PC-9 (cell line): ENCODE measurements at regions of chr15 and their contacts with region 1.

Region 1: GRCh38 chr15:82530606-82531379 is 9.5 kb downstream of the RPS17 start:
- DNase-seq: peak; percentile 48 to 75
- H3K4me3 ChIP-seq: peak overlapping the region; percentile 42; the same call in 1 of the 2 replicates
- H3K27ac ChIP-seq: no peak overlapping the region
- H3K4me1 ChIP-seq: no peaks in the 10 kb centered on the region
- H3K27me3 ChIP-seq: no peaks in the 10 kb centered on the region
- CTCF ChIP-seq: peak; percentile 97

Region 2: GRCh38 chr15:82571722-82572222 is 41.0 kb after region 1 on chr15:
- CTCF ChIA-PET with region 1: no interaction called
- POLR2A ChIA-PET with region 1: no interaction called
- intact Hi-C with region 1: no loop called
- DNase-seq: no peak
- H3K4me3 ChIP-seq: no peak overlapping the region
- H3K27ac ChIP-seq: no peak overlapping the region
- H3K4me1 ChIP-seq: no peaks in the 10 kb centered on the region
- H3K27me3 ChIP-seq: peaks cover 14% of the 10 kb centered on the region; the same call in 1 of the 2 replicates
- CTCF ChIP-seq: no peak

Region 3: GRCh38 chr15:82832601-82833361 is 302.0 kb after region 1 on chr15:
- CTCF ChIA-PET with region 1: no interaction called
- POLR2A ChIA-PET with region 1: no interaction called
- intact Hi-C with region 1: no loop called
- DNase-seq: peak; percentile 51 to 87
- H3K4me3 ChIP-seq: no peak overlapping the region
- H3K27ac ChIP-seq: peak overlapping the region; percentile 65
- H3K4me1 ChIP-seq: peaks cover 22% of the 10 kb centered on the region
- H3K27me3 ChIP-seq: no peaks in the 10 kb centered on the region
- CTCF ChIP-seq: no peak; the same call in 1 of the 2 replicates

Region 4: GRCh38 chr15:82999905-83000671 is 469.3 kb after region 1 on chr15:
- CTCF ChIA-PET with region 1: no interaction called
- POLR2A ChIA-PET with region 1: no interaction called
- intact Hi-C with region 1: loop called (anchors 2 kb)
- DNase-seq: peak; percentile 14 to 50
- H3K4me3 ChIP-seq: peak overlapping the region; percentile 29; the same call in 1 of the 2 replicates
- H3K27ac ChIP-seq: no peak overlapping the region
- H3K4me1 ChIP-seq: no peaks in the 10 kb centered on the region
- H3K27me3 ChIP-seq: no peaks in the 10 kb centered on the region
- CTCF ChIP-seq: peak; percentile 69

Region 5: GRCh38 chr15:83571820-83572707 is 1041.3 kb after region 1 on chr15:
- CTCF ChIA-PET with region 1: interaction called, 10 read pairs
- POLR2A ChIA-PET with region 1: no interaction called
- intact Hi-C with region 1: no loop called
- DNase-seq: no peak
- H3K4me3 ChIP-seq: no peak overlapping the region
- H3K27ac ChIP-seq: no peak overlapping the region
- H3K4me1 ChIP-seq: no peaks in the 10 kb centered on the region
- H3K27me3 ChIP-seq: no peaks in the 10 kb centered on the region
- CTCF ChIP-seq: peak; percentile 75